GM23248 (cell line): ENCODE measurements at regions of chr22 and their contacts with region 1.

Region 1: DNA sequence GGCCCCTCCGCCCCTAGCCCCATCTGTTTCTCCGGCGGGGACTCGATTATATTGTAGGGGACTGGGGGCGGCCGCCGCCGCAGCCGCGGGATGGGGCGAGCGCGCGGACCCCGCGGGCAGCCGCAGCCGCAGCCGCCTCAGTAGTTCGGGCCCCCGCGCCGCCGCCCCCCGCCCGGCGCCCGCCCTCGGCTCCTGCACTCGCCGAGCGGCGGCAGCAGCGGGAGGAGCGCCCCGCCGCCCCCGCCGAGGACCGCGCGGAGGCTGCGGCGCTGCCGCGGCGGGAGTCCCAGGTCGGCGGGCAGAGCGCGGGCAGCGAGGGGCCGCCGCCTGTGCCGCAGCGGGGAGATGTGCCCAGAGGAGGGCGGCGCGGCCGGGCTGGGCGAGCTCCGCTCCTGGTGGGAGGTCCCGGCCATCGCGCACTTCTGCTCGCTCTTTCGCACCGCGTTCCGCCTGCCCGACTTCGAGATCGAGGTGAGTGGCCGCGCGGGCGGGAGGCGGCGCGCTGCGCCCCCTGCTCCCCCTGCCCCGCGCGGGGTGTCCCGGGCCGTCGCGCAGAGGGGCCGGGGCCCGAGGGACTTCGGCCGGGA is at the start of gene CECR2:
- DNase-seq: peak; percentile 4
- H3K4me3 ChIP-seq: no peak within 1 kb of the TSS
- H3K27ac ChIP-seq: no peak within 1 kb of the TSS
- H3K4me1 ChIP-seq: no peaks in the 10 kb centered on the region
- H3K27me3 ChIP-seq: peaks cover 60% of the 10 kb centered on the region
- total RNA-seq, gene CECR2: not detected in 2 replicates

Region 2: GRCh38 chr22:17436382-17436980 is 66.9 kb after region 1 on chr22:
- in situ Hi-C with region 1: loop called (anchors 10 kb)
- DNase-seq: no peak
- H3K4me3 ChIP-seq: no peak overlapping the region
- H3K27ac ChIP-seq: no peak overlapping the region
- H3K4me1 ChIP-seq: no peaks in the 10 kb centered on the region
- H3K27me3 ChIP-seq: peaks cover 19% of the 10 kb centered on the region; the same call in 1 of the 2 replicates